Naive thymus-derived CD4-positive, alpha-beta T cell (primary cell): ENCODE measurements at regions of chr3 and their contacts with region 1.

Region 1: GRCh38 chr3:136861890-136862616 is at the start of gene NCK1:
- DNase-seq: peak; percentile 89 to 99 (median 98)
- ATAC-seq: peak; percentile 97
- H3K4me3 ChIP-seq: peak within 1 kb of the TSS; percentile 85
- H3K4me3 Mint-ChIP-seq: peak within 1 kb of the TSS; percentile 91 to 99 (median 94)
- H3K27ac ChIP-seq: peak within 1 kb of the TSS; percentile 93
- H3K27ac Mint-ChIP-seq: peak within 1 kb of the TSS; percentile 93 to 99 (median 97)
- H3K4me1 ChIP-seq: peaks cover 20 to 25% of the 10 kb centered on the region in 2 donors
- H3K4me1 Mint-ChIP-seq: peaks cover 32 to 74% (median 64%) of the 10 kb centered on the region in 7 donors
- H3K27me3 ChIP-seq: no peaks in the 10 kb centered on the region
- H3K27me3 Mint-ChIP-seq: no peaks in the 10 kb centered on the region
- total RNA-seq, gene NCK1: 41.1 to 59.6 (median 47.3) TPM

Region 2: DNA sequence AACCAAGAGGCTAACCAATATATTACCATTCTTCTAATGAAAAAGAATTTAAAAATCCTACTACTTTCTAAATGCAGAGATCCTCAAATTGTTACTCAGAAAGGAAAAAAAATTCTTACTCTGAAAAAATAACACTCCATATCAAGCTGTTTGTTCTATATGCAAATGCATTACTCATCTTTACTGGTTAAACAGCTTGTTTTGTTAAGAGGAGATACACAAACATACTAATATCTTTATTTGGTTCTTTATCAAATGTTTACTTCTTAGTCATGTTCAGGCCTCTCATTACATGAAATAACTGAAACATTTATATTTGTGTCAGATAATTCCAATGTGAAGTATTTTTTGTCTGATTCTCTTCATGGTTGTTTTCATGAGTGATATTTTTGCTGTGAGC is 465.1 kb before region 1 on chr3:
- CTCF ChIA-PET with region 1: no interaction called
- POLR2A ChIA-PET with region 1: no interaction called
- intact Hi-C with region 1: loop called in 1 of 2 experiments (anchors 10 kb)
- DNase-seq: no peak
- ATAC-seq: no peak
- H3K4me3 ChIP-seq: no peak overlapping the region
- H3K4me3 Mint-ChIP-seq: no peak overlapping the region
- H3K27ac ChIP-seq: no peak overlapping the region
- H3K27ac Mint-ChIP-seq: peak overlapping the region in 3 of 9 donors; percentile 15 to 32 (median 31)
- H3K4me1 ChIP-seq: no peaks in the 10 kb centered on the region
- H3K4me1 Mint-ChIP-seq: no peaks in the 10 kb centered on the region
- H3K27me3 ChIP-seq: no peaks in the 10 kb centered on the region
- H3K27me3 Mint-ChIP-seq: no peaks in the 10 kb centered on the region

Region 3: DNA sequence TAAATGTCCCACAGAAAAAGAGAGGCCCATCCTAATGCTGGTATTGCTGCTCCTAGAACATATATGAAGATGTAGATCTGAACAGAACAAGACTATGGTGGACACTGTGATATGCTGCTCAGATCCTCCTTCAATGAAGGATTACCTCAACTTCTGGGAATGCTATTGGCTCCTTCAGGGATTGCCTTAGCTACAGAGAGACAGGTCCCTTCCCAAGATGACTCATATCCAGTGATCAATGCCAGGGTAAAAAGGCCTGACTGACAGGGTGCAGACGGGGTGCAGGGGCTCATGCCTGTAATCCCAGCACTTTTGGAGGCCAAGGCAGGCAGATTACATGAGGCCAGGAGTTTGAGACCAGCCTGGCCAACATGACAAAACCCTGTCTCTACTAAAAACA is 89.3 kb before region 1 on chr3:
- CTCF ChIA-PET with region 1: no interaction called
- POLR2A ChIA-PET with region 1: no interaction called
- intact Hi-C with region 1: no loop called
- DNase-seq: no peak
- ATAC-seq: no peak
- H3K4me3 ChIP-seq: no peak overlapping the region
- H3K4me3 Mint-ChIP-seq: no peak overlapping the region
- H3K27ac ChIP-seq: no peak overlapping the region
- H3K27ac Mint-ChIP-seq: no peak overlapping the region
- H3K4me1 ChIP-seq: no peaks in the 10 kb centered on the region
- H3K4me1 Mint-ChIP-seq: no peaks in the 10 kb centered on the region
- H3K27me3 ChIP-seq: no peaks in the 10 kb centered on the region
- H3K27me3 Mint-ChIP-seq: no peaks in the 10 kb centered on the region

Region 4: DNA sequence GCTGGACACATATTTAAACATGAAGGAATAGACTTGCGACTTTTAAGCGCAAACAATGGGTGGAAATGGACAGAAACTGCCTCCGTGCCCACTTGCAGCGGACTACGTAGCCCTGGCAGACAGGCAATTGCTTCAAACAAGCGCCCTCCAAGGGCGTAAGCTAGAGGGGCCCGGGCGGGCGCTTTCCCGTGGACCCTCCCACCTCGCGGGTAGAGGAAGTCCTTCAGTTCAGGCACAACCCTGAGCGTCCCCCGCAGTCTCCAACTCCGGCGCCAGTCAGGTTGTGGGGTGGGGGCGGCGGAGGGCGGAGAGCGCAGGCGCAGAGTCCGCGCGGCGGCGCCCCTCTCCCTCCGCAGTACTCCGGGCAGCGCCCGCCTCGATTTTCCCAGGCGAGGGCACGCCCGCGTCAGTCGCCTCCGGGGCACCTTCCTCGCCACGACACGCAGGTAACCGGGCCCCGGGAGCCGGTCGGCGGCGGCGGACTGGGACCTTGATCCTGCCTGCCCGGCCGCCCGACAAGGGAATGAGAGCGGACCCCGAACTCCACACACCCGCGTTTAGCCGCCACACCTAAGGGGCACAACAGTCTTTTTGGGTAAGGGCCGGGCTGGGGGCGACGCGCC is 43.2 kb before region 1 on chr3 and contains the start of gene SLC35G2:
- CTCF ChIA-PET with region 1: no interaction called
- POLR2A ChIA-PET with region 1: no interaction called
- intact Hi-C with region 1: loop called (anchors 1 kb)
- DNase-seq: peak in 4 of 9 donors; percentile 7 to 63 (median 10)
- ATAC-seq: peak; percentile 67
- H3K4me3 ChIP-seq: peak within 1 kb of the TSS; percentile 44
- H3K4me3 Mint-ChIP-seq: peak within 1 kb of the TSS; percentile 83 to 94 (median 86)
- H3K27ac ChIP-seq: no peak within 1 kb of the TSS
- H3K27ac Mint-ChIP-seq: peak within 1 kb of the TSS in 1 of 9 donors; percentile 52
- H3K4me1 ChIP-seq: peaks cover 6 to 10% of the 10 kb centered on the region in 2 donors
- H3K4me1 Mint-ChIP-seq: peaks cover 10 to 23% (median 19%) of the 10 kb centered on the region in 7 donors
- H3K27me3 ChIP-seq: peaks cover 0 to 3% of the 10 kb centered on the region in 2 donors
- H3K27me3 Mint-ChIP-seq: peaks cover 50 to 65% (median 56%) of the 10 kb centered on the region in 5 donors
- total RNA-seq, gene SLC35G2: 0.60 TPM in 1 of 5 experiments, not detected in the others

Region 5: DNA sequence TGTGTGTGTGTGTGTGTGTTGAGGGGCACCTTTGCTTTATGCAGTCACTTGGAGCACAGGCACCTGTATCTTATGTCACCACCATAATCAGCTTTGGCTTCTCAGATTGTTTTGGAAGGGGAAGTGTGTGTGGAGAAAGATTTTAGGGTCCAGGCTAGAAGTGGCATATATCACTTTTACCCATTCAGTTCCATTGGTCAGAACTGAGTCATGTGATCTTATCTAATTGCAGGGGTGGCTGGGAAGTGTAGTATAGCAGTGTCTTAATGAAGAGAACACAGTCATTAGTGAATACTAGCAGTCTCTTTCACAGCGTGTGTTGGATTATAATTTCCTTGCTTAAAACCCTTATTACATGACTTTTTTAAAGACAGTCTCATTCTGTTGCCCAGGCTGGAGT is 20.5 kb after region 1 on chr3:
- CTCF ChIA-PET with region 1: interaction called, 6 read pairs
- POLR2A ChIA-PET with region 1: interaction called, 32 read pairs
- intact Hi-C with region 1: loop called (anchors 1 kb)
- DNase-seq: peak in 3 of 9 donors; percentile 12 to 28 (median 28)
- ATAC-seq: peak; percentile 73
- H3K4me3 ChIP-seq: no peak overlapping the region
- H3K4me3 Mint-ChIP-seq: peak overlapping the region in 4 of 10 donors; percentile 9 to 60 (median 52)
- H3K27ac ChIP-seq: no peak overlapping the region
- H3K27ac Mint-ChIP-seq: peak overlapping the region in 7 of 9 donors; percentile 6 to 85 (median 55)
- H3K4me1 ChIP-seq: peaks cover 33 to 38% of the 10 kb centered on the region in 2 donors
- H3K4me1 Mint-ChIP-seq: peaks cover 39 to 97% (median 83%) of the 10 kb centered on the region in 7 donors
- H3K27me3 ChIP-seq: no peaks in the 10 kb centered on the region
- H3K27me3 Mint-ChIP-seq: no peaks in the 10 kb centered on the region

Region 6: DNA sequence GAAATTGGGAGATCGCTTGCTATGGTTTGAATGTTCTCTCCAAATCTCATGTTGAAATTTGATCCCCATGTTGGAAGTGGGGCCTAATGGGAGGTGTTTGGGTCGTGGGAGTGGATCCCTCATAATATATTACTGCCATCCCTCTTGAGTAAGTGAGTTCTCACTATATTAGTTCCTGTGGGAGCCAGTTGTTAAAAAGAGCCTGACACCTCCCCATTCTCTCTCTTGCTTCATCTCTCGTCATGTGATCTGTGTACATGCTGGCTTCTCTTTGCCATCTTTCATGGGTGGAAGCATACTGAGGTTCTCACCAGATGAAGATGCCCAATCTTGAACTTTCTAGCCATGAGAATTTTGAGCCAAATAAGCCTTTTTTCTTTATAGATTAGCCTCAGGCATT is 52.7 kb after region 1 on chr3:
- CTCF ChIA-PET with region 1: no interaction called
- POLR2A ChIA-PET with region 1: interaction called, 14 read pairs
- intact Hi-C with region 1: loop called (anchors 1 kb)
- DNase-seq: no peak
- ATAC-seq: no peak
- H3K4me3 ChIP-seq: no peak overlapping the region
- H3K4me3 Mint-ChIP-seq: peak overlapping the region in 2 of 10 donors; percentile 1 to 55
- H3K27ac ChIP-seq: no peak overlapping the region
- H3K27ac Mint-ChIP-seq: peak overlapping the region in 1 of 9 donors; percentile 21
- H3K4me1 ChIP-seq: peaks cover 41 to 68% of the 10 kb centered on the region in 2 donors
- H3K4me1 Mint-ChIP-seq: peaks cover 49 to 100% (median 92%) of the 10 kb centered on the region in 7 donors
- H3K27me3 ChIP-seq: no peaks in the 10 kb centered on the region
- H3K27me3 Mint-ChIP-seq: no peaks in the 10 kb centered on the region

Region 7: DNA sequence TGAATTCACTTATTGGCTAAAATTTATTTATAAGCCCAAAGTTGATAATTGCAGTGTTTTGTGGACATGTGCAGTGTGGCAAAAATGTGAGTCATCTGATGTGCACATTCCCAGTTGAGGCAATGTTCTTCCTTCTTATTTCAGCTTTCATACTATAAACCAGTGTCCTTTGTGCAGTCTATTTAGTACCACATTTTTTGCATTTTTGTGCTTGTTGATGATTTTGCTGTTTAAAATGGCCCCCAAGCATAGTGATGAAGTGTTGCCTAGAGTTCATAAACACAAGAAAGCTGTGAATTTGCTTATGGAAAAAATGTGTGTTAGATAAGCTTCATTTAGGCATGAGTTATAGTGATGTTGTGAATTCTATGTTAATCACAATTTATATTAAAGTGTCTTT is 76.3 kb after region 1 on chr3:
- CTCF ChIA-PET with region 1: no interaction called
- POLR2A ChIA-PET with region 1: no interaction called
- intact Hi-C with region 1: loop called (anchors 5 kb)
- DNase-seq: no peak
- ATAC-seq: no peak
- H3K4me3 ChIP-seq: no peak overlapping the region
- H3K4me3 Mint-ChIP-seq: peak overlapping the region in 3 of 10 donors; percentile 2 to 66 (median 16)
- H3K27ac ChIP-seq: no peak overlapping the region
- H3K27ac Mint-ChIP-seq: peak overlapping the region in 1 of 9 donors; percentile 13
- H3K4me1 ChIP-seq: peaks cover 10 to 35% of the 10 kb centered on the region in 2 donors
- H3K4me1 Mint-ChIP-seq: peaks cover 45 to 82% (median 69%) of the 10 kb centered on the region in 7 donors
- H3K27me3 ChIP-seq: no peaks in the 10 kb centered on the region
- H3K27me3 Mint-ChIP-seq: no peaks in the 10 kb centered on the region